ENCODE measurements at regions of chr7 and their contacts with region 1.

Region 1: GRCh38 chr7:1473864-1474512 is 14.7 kb upstream of the MICALL2 start:
- DNase-seq: peak; percentile 73 to 92 (median 87)
- ATAC-seq: peak; percentile 95
- H3K4me3 ChIP-seq: no peak overlapping the region
- H3K4me3 Mint-ChIP-seq: no peak overlapping the region
- H3K27ac ChIP-seq: no peak overlapping the region
- H3K27ac Mint-ChIP-seq: no peak overlapping the region
- H3K4me1 ChIP-seq: peaks cover 11% of the 10 kb centered on the region
- H3K4me1 Mint-ChIP-seq: peaks cover 6% of the 10 kb centered on the region
- H3K27me3 ChIP-seq: no peaks in the 10 kb centered on the region
- H3K27me3 Mint-ChIP-seq: no peaks in the 10 kb centered on the region
- CTCF ChIP-seq: peak; percentile 91

Region 2: DNA sequence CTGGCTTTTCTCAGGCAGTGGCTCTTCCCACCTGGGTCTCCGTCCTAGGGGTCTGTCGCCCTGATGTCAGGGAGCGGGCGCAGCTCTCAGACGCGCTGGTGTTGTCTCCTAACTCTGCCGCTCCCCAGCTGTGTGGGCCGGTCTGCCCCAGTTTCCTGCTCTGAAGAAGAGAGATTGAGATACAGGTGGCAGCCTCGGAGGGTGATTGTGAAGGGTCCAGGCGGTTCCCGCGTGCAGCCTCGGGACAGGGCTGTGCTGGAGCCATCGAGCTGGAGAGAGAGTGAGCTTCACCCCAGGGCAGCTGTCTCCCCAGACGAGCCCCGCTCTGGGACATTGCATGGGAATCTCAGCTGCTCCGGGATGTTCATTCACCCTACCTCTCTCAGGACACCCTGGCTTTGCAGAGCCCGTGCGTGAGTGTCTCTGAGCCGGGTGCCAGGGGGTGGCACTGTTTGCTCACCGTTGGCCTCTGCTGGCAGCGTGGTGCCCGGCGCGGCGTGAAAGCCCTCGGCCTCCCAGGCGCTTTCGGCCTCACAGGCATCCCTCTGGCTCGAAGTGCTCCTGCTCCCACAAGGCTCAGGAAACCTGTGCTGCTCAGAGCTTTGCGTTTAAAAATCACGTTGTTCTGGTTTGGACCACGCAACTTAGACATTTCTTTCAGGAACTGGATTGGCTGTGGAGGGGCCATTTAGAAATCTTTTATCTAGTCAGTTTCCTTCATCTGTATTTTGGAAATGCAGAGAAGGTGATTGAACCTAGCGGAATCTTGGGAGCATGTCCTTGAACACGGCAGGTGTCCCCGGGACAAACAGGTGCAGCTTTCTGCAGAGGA is 280.2 kb before region 1 on chr7:
- CTCF ChIA-PET with region 1: interaction called, 4 read pairs
- POLR2A ChIA-PET with region 1: no interaction called
- intact Hi-C with region 1: loop called in 1 of 2 experiments (anchors 1 kb)
- DNase-seq: peak in 8 of 9 experiments; percentile 11 to 73 (median 41)
- ATAC-seq: no peak
- H3K4me3 ChIP-seq: no peak overlapping the region
- H3K4me3 Mint-ChIP-seq: no peak overlapping the region
- H3K27ac ChIP-seq: no peak overlapping the region
- H3K27ac Mint-ChIP-seq: no peak overlapping the region
- H3K4me1 ChIP-seq: peaks cover 12% of the 10 kb centered on the region
- H3K4me1 Mint-ChIP-seq: peaks cover 8% of the 10 kb centered on the region
- H3K27me3 ChIP-seq: no peaks in the 10 kb centered on the region
- H3K27me3 Mint-ChIP-seq: peaks cover 17% of the 10 kb centered on the region
- CTCF ChIP-seq: peak; percentile 15

Region 3: DNA sequence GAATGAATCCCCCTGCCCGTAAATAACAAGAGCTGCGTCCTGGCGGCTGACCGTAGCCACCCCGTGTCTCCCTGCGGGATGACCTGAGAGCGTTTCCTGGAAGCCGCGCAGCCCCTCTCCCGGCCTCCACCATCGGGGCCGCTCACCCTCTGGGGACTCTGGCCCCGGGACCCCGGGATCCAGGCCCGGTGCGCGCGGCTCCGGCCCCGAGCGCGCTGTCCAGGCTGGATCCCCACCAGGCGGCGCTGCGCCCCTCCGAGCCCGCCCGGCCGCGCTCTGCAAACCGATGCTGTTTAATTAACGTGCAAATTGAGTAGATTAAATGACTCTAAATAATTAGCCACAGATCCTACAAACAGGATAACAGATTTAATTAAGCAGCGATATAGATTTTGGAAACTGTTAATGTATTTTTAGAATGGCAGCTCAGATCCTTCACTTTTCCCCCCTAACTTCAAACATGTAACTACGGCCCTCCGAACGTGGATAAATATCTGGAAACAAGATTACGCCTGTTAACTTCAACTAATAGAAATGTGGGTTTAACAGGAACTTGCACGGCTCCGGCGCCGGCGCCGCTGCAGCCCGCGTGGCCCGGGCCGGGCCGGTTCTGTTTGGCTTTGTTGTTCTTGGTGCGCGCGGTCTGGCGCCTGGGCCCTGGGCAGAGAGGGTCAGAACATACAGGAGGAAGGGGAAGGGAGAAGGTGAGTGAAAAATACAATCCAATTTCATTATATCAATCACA is 248.4 kb before region 1 on chr7:
- CTCF ChIA-PET with region 1: interaction called, 7 read pairs
- POLR2A ChIA-PET with region 1: no interaction called
- intact Hi-C with region 1: loop called in 1 of 2 experiments (anchors 1 kb)
- DNase-seq: peak in 8 of 9 experiments; percentile 21 to 64 (median 50)
- ATAC-seq: peak; percentile 61
- H3K4me3 ChIP-seq: no peak overlapping the region
- H3K4me3 Mint-ChIP-seq: no peak overlapping the region
- H3K27ac ChIP-seq: no peak overlapping the region
- H3K27ac Mint-ChIP-seq: no peak overlapping the region
- H3K4me1 ChIP-seq: peaks cover 8% of the 10 kb centered on the region
- H3K4me1 Mint-ChIP-seq: peaks cover 7% of the 10 kb centered on the region
- H3K27me3 ChIP-seq: peaks cover 44 to 49% of the 10 kb centered on the region in 2 experiments
- H3K27me3 Mint-ChIP-seq: peaks cover 60% of the 10 kb centered on the region
- CTCF ChIP-seq: peak; percentile 81

Region 4: DNA sequence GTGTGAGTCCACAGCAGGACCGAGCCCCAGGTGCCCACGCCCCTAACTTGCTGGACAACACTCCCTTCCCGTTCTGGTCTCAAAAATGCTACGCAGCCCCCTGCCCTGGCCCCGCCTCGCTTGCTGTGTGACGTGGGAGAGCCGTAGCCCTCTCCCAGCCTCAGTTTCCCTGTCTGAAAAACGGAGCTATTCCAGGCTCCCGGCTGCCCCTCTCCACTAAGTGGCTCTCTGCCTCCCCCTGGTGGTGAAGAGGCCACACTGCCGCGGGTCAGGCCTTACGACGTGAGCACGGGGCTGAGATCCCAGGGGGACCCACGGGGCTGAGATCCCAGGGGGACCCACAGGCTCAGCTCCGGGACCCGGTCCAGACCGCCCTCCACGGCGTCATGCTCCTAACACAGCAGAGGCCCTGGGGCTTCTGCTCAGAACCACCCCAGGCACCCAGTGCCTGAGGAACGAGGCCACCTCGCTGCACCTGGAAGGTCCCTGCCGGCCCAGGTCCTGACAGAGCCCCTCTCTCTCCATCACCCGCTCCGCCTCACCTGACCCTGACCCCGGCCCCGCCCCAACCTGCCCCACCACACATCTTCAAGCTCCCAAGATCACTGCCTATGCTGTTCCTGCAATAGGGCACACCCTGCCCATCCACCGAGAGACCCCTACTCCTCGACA is 41.4 kb before region 1 on chr7:
- CTCF ChIA-PET with region 1: interaction called, 13 read pairs
- POLR2A ChIA-PET with region 1: no interaction called
- intact Hi-C with region 1: loop called in 1 of 2 experiments (anchors 1 kb)
- DNase-seq: peak; percentile 57 to 90 (median 80)
- ATAC-seq: peak; percentile 97
- H3K4me3 ChIP-seq: no peak overlapping the region
- H3K4me3 Mint-ChIP-seq: no peak overlapping the region
- H3K27ac ChIP-seq: no peak overlapping the region
- H3K27ac Mint-ChIP-seq: no peak overlapping the region
- H3K4me1 ChIP-seq: peaks cover 4% of the 10 kb centered on the region
- H3K4me1 Mint-ChIP-seq: peaks cover 2% of the 10 kb centered on the region
- H3K27me3 ChIP-seq: peaks cover 0 to 10% of the 10 kb centered on the region in 2 experiments
- H3K27me3 Mint-ChIP-seq: peaks cover 6% of the 10 kb centered on the region
- CTCF ChIP-seq: peak; percentile 97

Region 5: DNA sequence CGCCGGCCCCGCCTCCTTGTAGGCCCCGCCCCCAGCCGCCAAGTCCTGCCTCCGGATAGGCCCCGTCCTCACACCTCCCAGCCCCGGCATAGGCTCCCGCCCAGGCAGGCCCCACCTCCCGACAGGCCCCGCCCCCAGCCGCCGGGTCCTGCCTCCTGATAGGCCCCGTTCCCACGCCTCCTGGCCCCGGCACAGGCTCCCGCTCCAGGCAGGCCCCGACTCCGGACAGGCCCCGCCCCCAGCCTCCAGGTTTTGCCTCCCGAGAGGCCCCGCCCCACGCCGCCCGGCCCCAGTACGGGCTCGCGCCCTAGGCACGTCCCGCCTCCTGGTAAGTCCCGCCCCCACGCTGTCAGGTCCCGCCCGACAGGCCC is 14.5 kb before region 1 on chr7:
- CTCF ChIA-PET with region 1: interaction called, 9 read pairs
- POLR2A ChIA-PET with region 1: no interaction called
- intact Hi-C with region 1: loop called in 1 of 2 experiments (anchors 1 kb)
- DNase-seq: peak; percentile 90 to 98 (median 97)
- ATAC-seq: peak; percentile 95
- H3K4me3 ChIP-seq: peak overlapping the region; percentile 65 to 90
- H3K4me3 Mint-ChIP-seq: peak overlapping the region; percentile 77
- H3K27ac ChIP-seq: no peak overlapping the region
- H3K27ac Mint-ChIP-seq: no peak overlapping the region
- H3K4me1 ChIP-seq: peaks cover 24% of the 10 kb centered on the region
- H3K4me1 Mint-ChIP-seq: peaks cover 17% of the 10 kb centered on the region
- H3K27me3 ChIP-seq: no peaks in the 10 kb centered on the region
- H3K27me3 Mint-ChIP-seq: no peaks in the 10 kb centered on the region
- CTCF ChIP-seq: no peak

Region 6: GRCh38 chr7:1488016-1488415 is 14.0 kb after region 1 on chr7:
- CTCF ChIA-PET with region 1: interaction called, 19 read pairs
- POLR2A ChIA-PET with region 1: no interaction called
- intact Hi-C with region 1: no loop called
- DNase-seq: no peak
- ATAC-seq: no peak
- H3K4me3 ChIP-seq: no peak overlapping the region
- H3K4me3 Mint-ChIP-seq: no peak overlapping the region
- H3K27ac ChIP-seq: no peak overlapping the region
- H3K27ac Mint-ChIP-seq: no peak overlapping the region
- H3K4me1 ChIP-seq: no peaks in the 10 kb centered on the region
- H3K4me1 Mint-ChIP-seq: no peaks in the 10 kb centered on the region
- H3K27me3 ChIP-seq: no peaks in the 10 kb centered on the region
- H3K27me3 Mint-ChIP-seq: no peaks in the 10 kb centered on the region
- CTCF ChIP-seq: no peak

Measured in CD8-positive, alpha-beta T cell (primary cell).